ENCODE measurements at regions of chr1 and their contacts with region 1.

Region 1: DNA sequence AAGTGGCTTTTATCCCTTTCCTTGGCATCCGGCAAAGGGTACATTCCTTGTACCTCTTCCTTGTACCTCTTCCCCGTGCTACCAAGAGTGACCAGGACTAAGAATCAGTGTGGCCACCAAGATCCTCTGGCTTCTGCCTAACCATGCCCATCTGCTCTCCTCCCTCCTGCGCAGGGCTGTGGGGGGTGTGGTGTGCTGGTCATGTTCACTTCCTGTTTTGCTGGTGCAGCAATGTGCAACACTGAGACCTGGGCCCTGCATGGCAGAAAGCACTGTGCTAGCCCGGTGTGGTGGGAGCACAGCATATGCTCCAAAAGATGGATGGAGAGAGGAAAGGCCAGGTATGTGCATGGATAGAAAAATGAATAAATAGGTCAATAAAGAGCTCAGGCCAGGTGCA is 33.3 kb upstream of the TENT5C start:
- DNase-seq: no peak

Region 2: DNA sequence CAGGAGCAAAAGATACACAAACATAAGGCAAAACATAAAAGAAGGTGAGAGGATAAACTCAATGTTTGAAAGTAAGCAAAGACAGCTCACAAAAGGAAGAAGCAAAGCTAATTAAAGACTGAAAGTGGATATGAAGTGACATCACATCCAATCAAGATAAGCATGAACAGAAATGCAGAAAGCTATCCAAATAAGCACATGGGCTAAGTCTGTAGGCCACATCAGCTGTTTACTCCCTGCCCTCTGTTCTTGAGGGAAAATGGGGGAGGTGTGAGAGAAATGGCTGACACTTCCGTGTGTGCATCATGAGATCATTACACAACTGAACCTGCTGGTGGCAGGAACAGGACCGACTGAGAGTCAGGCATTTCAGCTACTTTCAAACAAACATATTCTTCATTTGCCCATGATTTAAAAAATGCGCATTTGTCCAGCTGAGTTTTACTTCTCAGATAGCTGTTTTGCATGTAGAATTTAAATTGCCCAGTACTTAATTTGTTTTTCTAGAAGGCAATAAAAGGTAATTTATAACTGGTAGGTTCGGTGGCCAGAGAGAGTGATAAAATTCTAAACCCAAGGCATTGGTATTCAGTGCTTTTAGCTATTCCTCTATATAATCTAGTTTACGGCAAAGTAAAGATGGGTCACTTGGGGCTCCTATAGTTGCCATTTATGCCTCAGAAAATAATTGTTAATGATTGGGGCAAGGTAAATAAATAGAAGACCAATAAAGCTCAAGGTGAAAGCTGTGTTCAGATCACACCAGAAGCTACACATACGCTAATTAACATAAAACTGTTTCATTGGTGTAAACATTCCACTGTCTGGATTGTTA is 232.5 kb before region 1 on chr1:
- intact Hi-C with region 1: no loop called
- DNase-seq: no peak

Region 3: GRCh38 chr1:117586747-117587498 is 14.4 kb after region 1 on chr1:
- intact Hi-C with region 1: loop called in 1 of 2 experiments (anchors 1 kb)
- DNase-seq: peak; percentile 74